Activated CD4-positive, alpha-beta memory T cell treated with anti-CD3 and anti-CD28 coated beads for 36 hours (primary cell): ENCODE measurements at regions of chr19 and their contacts with region 1.

Region 1: GRCh38 chr19:10000171-10000826 is 10.0 kb downstream of the COL5A3 start:
- DNase-seq: peak; percentile 77
- H3K4me3 Mint-ChIP-seq: no peak overlapping the region
- H3K27ac Mint-ChIP-seq: no peak overlapping the region
- H3K4me1 Mint-ChIP-seq: peaks cover 8% of the 10 kb centered on the region
- H3K27me3 Mint-ChIP-seq: peaks cover 24% of the 10 kb centered on the region

Region 2: DNA sequence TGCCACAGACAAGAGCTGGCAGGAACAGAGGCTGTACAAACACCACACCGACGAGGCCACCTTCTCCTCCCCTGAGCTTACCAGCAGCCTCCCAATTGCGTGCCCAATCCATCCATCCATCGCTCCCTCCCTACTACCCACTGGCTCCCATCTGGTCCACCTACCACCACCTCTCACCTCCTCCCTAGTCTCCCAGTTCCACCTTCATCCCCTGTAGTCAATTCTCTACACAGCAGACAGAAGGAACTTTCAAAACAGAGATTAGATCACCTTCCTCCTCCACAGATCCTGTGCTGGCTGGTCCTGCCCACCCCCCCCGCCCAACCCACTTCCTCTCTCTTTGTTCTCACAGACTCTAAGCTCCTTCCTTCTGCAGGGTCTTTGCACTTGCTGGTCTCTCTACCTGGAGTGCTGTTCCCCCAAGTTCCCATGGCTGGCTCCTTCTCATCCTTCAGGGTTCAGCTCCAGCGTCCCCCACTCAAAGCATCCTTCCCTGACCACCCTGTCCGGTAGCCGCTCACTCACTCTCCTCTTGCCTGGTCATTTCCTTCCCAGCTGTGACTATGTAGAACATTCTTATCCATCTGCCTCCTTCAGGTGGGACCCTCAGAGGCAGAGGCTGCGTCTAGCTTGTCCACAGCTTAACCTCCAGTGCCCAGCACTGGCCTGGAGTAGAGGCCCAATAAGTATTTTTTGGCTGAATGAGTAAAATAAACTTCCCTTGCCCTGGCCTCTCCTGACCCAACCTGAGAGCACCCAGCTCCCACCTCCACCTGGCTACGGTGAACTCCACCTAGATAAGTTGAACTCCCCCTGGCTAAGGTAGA is 142.2 kb before region 1 on chr19:
- CTCF ChIA-PET with region 1: interaction called, 3 read pairs
- POLR2A ChIA-PET with region 1: no interaction called
- intact Hi-C with region 1: loop called (anchors 1 kb)
- DNase-seq: peak; percentile 41
- H3K4me3 Mint-ChIP-seq: peak overlapping the region; percentile 56
- H3K27ac Mint-ChIP-seq: peak overlapping the region; percentile 86
- H3K4me1 Mint-ChIP-seq: peaks cover 56% of the 10 kb centered on the region
- H3K27me3 Mint-ChIP-seq: no peaks in the 10 kb centered on the region

Region 3: GRCh38 chr19:9934132-9934950 is 66.0 kb before region 1 on chr19:
- CTCF ChIA-PET with region 1: interaction called, 41 read pairs
- POLR2A ChIA-PET with region 1: no interaction called
- intact Hi-C with region 1: loop called (anchors 2 kb)
- DNase-seq: peak; percentile 90
- H3K4me3 Mint-ChIP-seq: no peak overlapping the region
- H3K27ac Mint-ChIP-seq: no peak overlapping the region
- H3K4me1 Mint-ChIP-seq: peaks cover 28% of the 10 kb centered on the region
- H3K27me3 Mint-ChIP-seq: peaks cover 46% of the 10 kb centered on the region

Region 4: GRCh38 chr19:9986787-9987281 is 13.5 kb before region 1 on chr19:
- CTCF ChIA-PET with region 1: interaction called, 21 read pairs
- POLR2A ChIA-PET with region 1: no interaction called
- intact Hi-C with region 1: no loop called
- DNase-seq: no peak
- H3K4me3 Mint-ChIP-seq: no peak overlapping the region
- H3K27ac Mint-ChIP-seq: no peak overlapping the region
- H3K4me1 Mint-ChIP-seq: no peaks in the 10 kb centered on the region
- H3K27me3 Mint-ChIP-seq: peaks cover 1% of the 10 kb centered on the region

Region 5: DNA sequence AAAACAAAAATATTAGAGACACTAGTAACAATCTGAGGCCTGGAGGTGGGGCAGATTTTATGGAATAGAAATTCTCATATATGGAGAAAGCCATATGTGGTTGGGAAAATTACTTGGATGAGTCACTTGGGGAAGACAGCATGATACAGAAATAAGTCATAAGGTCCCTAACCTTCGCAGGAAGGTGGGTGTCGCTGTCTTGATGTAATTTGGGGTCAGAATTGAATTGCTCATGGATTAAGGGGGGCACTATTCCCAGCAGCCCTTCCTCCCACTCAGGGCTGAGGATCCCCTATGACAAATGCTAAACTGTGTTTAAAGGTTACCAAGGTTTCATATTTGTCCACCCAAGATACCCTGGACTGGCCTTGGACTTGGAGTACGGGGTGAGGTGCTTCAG is 18.0 kb after region 1 on chr19:
- CTCF ChIA-PET with region 1: interaction called, 21 read pairs
- POLR2A ChIA-PET with region 1: no interaction called
- intact Hi-C with region 1: no loop called
- DNase-seq: no peak
- H3K4me3 Mint-ChIP-seq: no peak overlapping the region
- H3K27ac Mint-ChIP-seq: no peak overlapping the region
- H3K4me1 Mint-ChIP-seq: peaks cover 4% of the 10 kb centered on the region
- H3K27me3 Mint-ChIP-seq: peaks cover 17% of the 10 kb centered on the region

Region 6: DNA sequence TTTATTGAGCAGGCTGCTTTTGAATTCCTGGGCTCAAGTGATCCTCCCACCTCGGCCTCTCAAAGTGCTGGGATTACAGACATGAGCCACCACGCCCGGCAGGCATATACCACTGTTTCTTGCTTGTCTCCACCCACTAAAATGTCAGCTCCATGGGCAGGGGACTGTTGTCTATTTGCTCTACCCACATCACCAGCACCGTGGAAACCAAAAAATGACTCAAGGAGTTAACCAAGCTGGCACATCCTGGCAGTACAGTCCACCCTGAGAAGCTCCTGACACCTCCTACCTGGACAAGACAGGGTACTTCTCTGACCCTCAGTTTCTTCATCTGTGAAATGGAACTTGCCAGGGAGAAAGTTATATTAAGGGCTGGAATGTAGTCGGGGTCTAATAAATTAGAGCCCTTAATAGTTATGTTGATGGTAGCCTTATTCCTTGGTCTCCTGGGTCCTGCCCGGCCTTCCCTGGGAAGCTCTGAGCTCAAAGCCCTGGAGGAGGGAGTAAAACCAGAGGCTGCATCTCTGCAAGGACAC is 26.9 kb after region 1 on chr19:
- CTCF ChIA-PET with region 1: interaction called, 36 read pairs
- POLR2A ChIA-PET with region 1: no interaction called
- intact Hi-C with region 1: loop called (anchors 2 kb)
- DNase-seq: no peak
- H3K4me3 Mint-ChIP-seq: no peak overlapping the region
- H3K27ac Mint-ChIP-seq: no peak overlapping the region
- H3K4me1 Mint-ChIP-seq: peaks cover 2% of the 10 kb centered on the region
- H3K27me3 Mint-ChIP-seq: peaks cover 9% of the 10 kb centered on the region